Lower leg skin (tissue), 4 donors: ENCODE measurements at regions of chr22 and their contacts with region 1.

Region 1: GRCh38 chr22:26377170-26377830 is 51.8 kb upstream of the ASPHD2 start:
- DNase-seq: no peak
- H3K4me3 ChIP-seq: no peak overlapping the region
- CTCF ChIP-seq: no peak
- POLR2A ChIP-seq: no peak

Region 2: DNA sequence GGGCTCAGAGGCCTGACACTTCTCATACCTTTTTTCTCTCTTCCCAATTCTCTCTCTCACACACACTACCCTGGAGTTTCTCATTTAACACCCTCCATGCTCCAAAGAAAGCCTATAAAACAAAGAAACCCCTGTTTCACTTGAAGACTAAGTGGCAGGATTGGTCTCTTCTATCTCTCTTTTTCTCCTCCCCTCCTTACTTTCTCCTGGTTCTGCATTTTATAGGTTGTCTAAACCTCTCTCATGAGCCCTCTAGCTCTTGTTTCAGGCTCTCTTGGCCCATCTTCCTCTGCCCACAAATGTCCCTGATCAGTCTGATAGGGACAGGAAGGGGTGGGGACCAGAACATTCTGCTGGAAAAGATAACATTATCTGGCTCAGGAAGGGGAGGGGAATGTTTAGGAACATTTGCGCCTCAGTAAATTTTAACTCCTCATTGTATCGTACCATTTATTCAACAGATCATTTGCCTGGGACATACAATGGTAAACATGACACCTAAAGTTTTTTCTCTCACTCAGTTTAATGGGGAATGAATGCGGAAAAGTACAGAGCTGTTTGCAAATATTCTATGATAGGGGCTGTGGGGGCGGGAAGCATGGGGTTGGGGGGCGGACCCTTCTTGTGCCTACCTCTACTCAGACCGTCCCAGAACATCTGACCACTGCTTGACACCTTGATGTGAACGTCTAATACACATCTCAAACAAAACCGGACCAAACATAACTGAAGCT is 255.3 kb after region 1 on chr22:
- intact Hi-C with region 1: loop called (anchors 10 kb)
- DNase-seq: no peak
- H3K4me3 ChIP-seq: no peak overlapping the region
- CTCF ChIP-seq: no peak
- POLR2A ChIP-seq: no peak